Endothelial cell of umbilical vein (primary cell): ENCODE measurements at regions of chr12 and their contacts with region 1.

Region 1: DNA sequence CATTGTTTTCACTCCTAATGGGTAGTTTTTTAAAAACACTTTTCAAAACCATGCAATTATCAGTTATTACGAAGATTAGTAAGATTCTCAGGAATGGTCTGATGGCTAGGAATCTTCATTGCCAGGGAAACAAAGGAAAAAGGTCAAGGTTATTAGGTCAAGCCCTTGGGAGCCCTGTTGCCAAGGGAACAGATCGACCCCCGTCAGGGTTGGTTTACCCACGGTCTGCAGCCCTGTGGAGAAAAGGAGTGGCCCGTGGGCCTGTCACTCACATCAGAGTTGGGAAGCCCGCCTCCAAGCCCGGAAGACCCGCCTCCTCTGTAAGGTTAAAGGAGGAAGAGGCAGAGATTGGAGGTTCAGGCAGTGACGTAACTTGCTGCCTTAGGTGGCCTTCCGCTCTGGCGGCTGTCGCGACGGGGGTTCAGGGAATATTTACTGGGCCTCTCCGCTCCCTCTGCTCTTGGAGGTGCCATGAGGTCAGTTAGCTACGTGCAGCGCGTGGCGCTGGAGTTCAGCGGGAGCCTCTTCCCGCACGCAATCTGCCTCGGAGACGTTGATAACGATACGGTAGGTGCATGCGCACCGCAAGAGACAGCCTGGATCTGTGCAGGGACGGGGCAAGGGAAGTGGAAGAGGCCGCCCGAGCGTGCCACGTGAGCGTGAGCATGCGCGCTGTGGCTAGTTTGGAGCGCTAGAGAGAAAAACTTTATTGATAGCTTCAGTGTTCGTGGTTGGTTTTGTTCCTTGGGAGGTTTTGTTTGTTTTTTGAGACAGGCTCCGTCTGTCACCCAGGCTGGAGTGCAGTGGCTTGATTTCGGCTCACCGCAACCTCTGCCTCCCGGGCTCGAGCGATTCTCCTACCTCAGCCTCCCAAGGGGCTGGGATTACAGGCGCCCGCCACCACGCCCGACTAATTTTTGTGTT is at the start of gene ITFG2:
- DNase-seq: peak; percentile 98
- H3K4me3 ChIP-seq: peak within 1 kb of the TSS; percentile 58 to 94 (median 71)
- H3K27ac ChIP-seq: peak within 1 kb of the TSS; percentile 52
- H3K4me1 ChIP-seq: peaks cover 6% of the 10 kb centered on the region
- H3K27me3 ChIP-seq: no peaks in the 10 kb centered on the region
- CTCF ChIP-seq: no peak
- POLR2A ChIP-seq: peak; percentile 97
- total RNA-seq, gene ITFG2: 31.9 and 34.5 TPM in 2 replicates

Region 2: GRCh38 chr12:2739817-2740641 is 72.5 kb before region 1 on chr12:
- CTCF ChIA-PET with region 1: interaction called, 17 read pairs
- POLR2A ChIA-PET with region 1: no interaction called
- dilution Hi-C with region 1: no loop called
- intact Hi-C with region 1: loop called (anchors 2 kb)
- DNase-seq: peak; percentile 37
- H3K4me3 ChIP-seq: no peak overlapping the region
- H3K27ac ChIP-seq: no peak overlapping the region
- H3K4me1 ChIP-seq: no peaks in the 10 kb centered on the region
- H3K27me3 ChIP-seq: no peaks in the 10 kb centered on the region
- CTCF ChIP-seq: peak; percentile 25 to 29
- POLR2A ChIP-seq: no peak

Region 3: GRCh38 chr12:2794736-2795289 is 17.7 kb before region 1 on chr12 and contains the start of gene FKBP4:
- CTCF ChIA-PET with region 1: interaction called, 31 read pairs
- POLR2A ChIA-PET with region 1: interaction called, 4 read pairs
- dilution Hi-C with region 1: no loop called
- intact Hi-C with region 1: loop called (anchors 1 kb)
- DNase-seq: peak; percentile 82
- H3K4me3 ChIP-seq: peak within 1 kb of the TSS; percentile 69 to 93 (median 73)
- H3K27ac ChIP-seq: peak within 1 kb of the TSS; percentile 1
- H3K4me1 ChIP-seq: peaks cover 23% of the 10 kb centered on the region
- H3K27me3 ChIP-seq: peaks cover 5 to 7% of the 10 kb centered on the region in 2 experiments
- CTCF ChIP-seq: no peak
- POLR2A ChIP-seq: peak; percentile 76
- total RNA-seq, gene FKBP4: 74.1 and 85.6 TPM in 2 replicates

Region 4: GRCh38 chr12:2845280-2845679 is 32.7 kb after region 1 on chr12:
- CTCF ChIA-PET with region 1: interaction called, 9 read pairs
- POLR2A ChIA-PET with region 1: interaction called, 3 read pairs
- dilution Hi-C with region 1: no loop called
- intact Hi-C with region 1: loop called (anchors 1 kb)
- DNase-seq: peak; percentile 74
- H3K4me3 ChIP-seq: no peak overlapping the region
- H3K27ac ChIP-seq: peak overlapping the region; percentile 75
- H3K4me1 ChIP-seq: peaks cover 23% of the 10 kb centered on the region
- H3K27me3 ChIP-seq: no peaks in the 10 kb centered on the region
- CTCF ChIP-seq: no peak
- POLR2A ChIP-seq: peak; percentile 65